Activated B cell treated with CpG ODN at 0.5 μM for 24 hours (primary cell): ENCODE measurements at regions of chr5 and their contacts with region 1.

Region 1: DNA sequence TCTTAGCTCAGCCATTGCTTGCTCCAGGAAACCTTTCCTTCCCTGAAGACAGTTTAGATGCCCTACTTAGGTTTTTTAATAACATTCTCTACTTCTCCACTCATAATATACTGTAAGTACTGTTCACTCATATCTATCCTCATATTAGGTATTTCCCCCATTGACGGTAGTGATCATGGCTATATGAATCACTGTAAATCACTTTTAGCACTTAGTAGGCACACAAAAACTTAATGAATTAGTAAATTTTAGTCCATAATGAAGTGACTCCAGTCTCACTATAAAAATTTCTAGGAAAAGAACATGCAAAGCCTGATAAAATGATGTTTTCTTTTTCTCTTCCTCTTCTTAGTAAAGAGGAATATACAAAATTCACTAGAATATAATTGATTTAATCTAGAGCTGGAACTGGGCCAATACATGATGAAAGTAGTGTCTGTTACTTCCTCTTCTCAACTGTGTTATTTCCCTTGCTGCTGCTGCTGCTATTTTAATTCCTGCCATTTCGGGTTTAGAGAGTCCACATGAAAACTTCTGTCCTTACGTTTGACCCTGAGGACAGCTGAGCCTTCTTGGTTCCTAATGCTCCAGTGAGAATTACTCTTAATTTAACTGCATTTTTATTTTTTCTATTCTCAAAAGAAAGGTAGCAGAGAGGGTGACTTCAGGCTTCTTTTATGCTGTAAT is 73.5 kb downstream of the LNPEP start:
- DNase-seq: no peak
- ATAC-seq: peak; percentile 83
- H3K4me3 Mint-ChIP-seq: peak overlapping the region; percentile 66
- H3K27ac Mint-ChIP-seq: peak overlapping the region; percentile 91
- H3K4me1 Mint-ChIP-seq: peaks cover 24% of the 10 kb centered on the region
- H3K27me3 Mint-ChIP-seq: no peaks in the 10 kb centered on the region
- CTCF ChIP-seq: no peak

Region 2: GRCh38 chr5:96919754-96920197 is 89.6 kb before region 1 on chr5:
- CTCF ChIA-PET with region 1: no interaction called
- POLR2A ChIA-PET with region 1: interaction called, 10 read pairs
- intact Hi-C with region 1: no loop called
- DNase-seq: no peak
- ATAC-seq: peak; percentile 65
- H3K4me3 Mint-ChIP-seq: no peak overlapping the region
- H3K27ac Mint-ChIP-seq: peak overlapping the region; percentile 12
- H3K4me1 Mint-ChIP-seq: peaks cover 42% of the 10 kb centered on the region
- H3K27me3 Mint-ChIP-seq: no peaks in the 10 kb centered on the region
- CTCF ChIP-seq: no peak

Region 3: DNA sequence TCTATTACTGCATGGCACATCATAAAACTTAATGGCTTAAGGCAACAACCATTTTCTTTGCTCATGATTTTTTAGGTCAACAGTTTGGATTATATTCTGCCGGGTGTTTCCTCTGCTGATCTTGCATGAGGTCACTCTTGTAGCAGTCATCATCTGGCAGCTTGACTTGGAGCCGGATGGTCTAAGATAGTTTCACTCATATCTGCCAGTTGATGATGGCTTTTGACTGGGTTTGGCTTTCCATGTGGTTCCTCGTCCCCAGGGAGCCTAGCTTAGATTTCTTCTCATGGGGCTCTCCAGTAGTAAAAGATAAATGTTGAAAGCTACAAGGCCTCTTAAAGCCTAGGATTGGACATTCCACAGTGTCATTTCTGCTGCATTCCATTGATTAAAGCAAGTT is 46.1 kb before region 1 on chr5:
- CTCF ChIA-PET with region 1: no interaction called
- POLR2A ChIA-PET with region 1: no interaction called
- intact Hi-C with region 1: loop called (anchors 2 kb)
- DNase-seq: no peak
- ATAC-seq: peak; percentile 59
- H3K4me3 Mint-ChIP-seq: no peak overlapping the region
- H3K27ac Mint-ChIP-seq: peak overlapping the region; percentile 90
- H3K4me1 Mint-ChIP-seq: peaks cover 84% of the 10 kb centered on the region
- H3K27me3 Mint-ChIP-seq: no peaks in the 10 kb centered on the region
- CTCF ChIP-seq: no peak

Region 4: DNA sequence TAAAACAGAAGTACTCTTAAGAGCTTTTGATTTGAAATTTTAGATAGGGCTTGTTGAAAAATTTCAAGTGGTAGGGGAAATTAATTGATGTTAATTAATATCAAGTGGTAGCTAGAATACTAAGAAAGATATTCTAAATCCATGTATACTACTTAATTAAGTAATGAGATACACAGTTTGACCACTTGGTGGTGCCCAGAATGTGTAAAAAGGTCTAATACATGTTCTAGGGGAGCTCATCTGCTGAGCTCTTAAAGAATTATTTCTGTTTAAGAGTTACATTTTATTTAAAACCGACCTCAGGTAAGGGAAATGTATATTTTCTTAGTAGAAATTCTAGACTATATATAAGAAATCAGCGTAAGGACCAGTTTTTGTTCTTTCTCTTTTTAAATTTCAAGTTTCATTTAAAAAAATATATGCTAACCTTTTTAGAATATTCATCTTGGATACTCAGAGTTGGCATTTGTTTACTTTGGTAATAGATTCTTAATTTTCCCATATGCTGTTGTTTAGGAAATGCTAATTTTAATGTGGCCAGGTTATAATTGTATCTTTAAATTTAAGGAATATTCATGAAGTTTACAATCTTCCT is 12.0 kb before region 1 on chr5:
- CTCF ChIA-PET with region 1: interaction called, 10 read pairs
- POLR2A ChIA-PET with region 1: interaction called, 10 read pairs
- intact Hi-C with region 1: no loop called
- DNase-seq: no peak
- ATAC-seq: peak; percentile 68
- H3K4me3 Mint-ChIP-seq: no peak overlapping the region
- H3K27ac Mint-ChIP-seq: no peak overlapping the region
- H3K4me1 Mint-ChIP-seq: peaks cover 6% of the 10 kb centered on the region
- H3K27me3 Mint-ChIP-seq: no peaks in the 10 kb centered on the region
- CTCF ChIP-seq: no peak